PC-3 (cell line): ENCODE measurements at regions of chr18 and their contacts with region 1.

Region 1: GRCh38 chr18:3447895-3448837 is 1.8 kb upstream of the TGIF1 start:
- DNase-seq: peak; percentile 97
- ATAC-seq: peak; percentile 69
- H3K4me3 ChIP-seq: peak overlapping the region; percentile 96
- H3K27ac ChIP-seq: peak overlapping the region; percentile 95
- H3K4me1 ChIP-seq: peaks cover 19% of the 10 kb centered on the region
- H3K27me3 ChIP-seq: no peaks in the 10 kb centered on the region
- CTCF ChIP-seq: peak; percentile 45

Region 2: DNA sequence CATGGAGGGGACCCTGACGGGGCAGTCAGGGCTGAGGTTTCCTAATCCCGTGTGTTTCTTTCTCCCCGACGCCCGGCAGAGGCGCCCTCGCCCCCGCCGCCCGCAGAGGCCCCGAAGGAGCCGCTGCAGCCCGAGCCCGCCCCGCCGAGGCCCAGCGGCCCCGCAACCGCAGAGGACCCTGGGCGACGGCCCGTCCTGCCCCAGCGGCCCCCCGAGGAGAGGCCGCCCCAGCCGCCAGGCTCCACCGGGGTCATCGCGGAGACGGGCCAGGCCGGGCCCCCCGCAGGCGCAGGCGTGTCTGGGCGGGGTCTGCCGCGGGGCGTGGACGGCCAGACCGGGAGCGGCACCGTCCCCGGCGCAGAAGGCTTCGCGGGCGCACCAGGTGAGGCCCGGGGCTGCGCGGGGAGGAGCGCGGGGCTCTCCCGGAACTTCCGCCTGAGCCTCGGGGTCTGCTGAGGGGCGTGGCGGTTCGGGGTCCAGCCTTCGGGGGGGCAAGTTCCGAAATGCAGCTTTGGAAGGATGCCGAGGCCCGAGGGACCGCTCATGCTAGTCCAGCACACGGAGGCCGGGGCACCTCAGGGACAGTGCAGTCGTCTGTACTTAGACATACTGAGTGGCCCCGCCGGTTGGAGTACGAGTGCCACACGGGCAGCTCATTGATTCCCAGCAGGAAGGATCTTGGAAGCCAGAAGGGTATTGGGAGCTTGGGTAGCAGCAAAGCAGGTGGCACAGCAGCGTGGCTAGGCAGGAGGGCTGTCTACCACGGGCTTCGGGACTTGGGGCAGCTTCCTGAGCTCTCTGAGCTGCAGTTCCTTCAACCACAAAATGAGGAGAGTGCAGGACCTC is 541.2 kb before region 1 on chr18:
- CTCF ChIA-PET with region 1: no interaction called
- POLR2A ChIA-PET with region 1: interaction called, 13 read pairs
- intact Hi-C with region 1: no loop called
- DNase-seq: peak; percentile 31
- ATAC-seq: peak; percentile 65
- H3K4me3 ChIP-seq: peak overlapping the region; percentile 84
- H3K27ac ChIP-seq: no peak overlapping the region; the same call in 1 of the 2 replicates
- H3K4me1 ChIP-seq: peaks cover 6% of the 10 kb centered on the region; the same call in 1 of the 2 replicates
- H3K27me3 ChIP-seq: 0 out of 2 replicates have a peak, but pooled peaks cover 3% of the 10 kb centered on the region
- CTCF ChIP-seq: no peak; the same call in 1 of the 2 replicates

Region 3: DNA sequence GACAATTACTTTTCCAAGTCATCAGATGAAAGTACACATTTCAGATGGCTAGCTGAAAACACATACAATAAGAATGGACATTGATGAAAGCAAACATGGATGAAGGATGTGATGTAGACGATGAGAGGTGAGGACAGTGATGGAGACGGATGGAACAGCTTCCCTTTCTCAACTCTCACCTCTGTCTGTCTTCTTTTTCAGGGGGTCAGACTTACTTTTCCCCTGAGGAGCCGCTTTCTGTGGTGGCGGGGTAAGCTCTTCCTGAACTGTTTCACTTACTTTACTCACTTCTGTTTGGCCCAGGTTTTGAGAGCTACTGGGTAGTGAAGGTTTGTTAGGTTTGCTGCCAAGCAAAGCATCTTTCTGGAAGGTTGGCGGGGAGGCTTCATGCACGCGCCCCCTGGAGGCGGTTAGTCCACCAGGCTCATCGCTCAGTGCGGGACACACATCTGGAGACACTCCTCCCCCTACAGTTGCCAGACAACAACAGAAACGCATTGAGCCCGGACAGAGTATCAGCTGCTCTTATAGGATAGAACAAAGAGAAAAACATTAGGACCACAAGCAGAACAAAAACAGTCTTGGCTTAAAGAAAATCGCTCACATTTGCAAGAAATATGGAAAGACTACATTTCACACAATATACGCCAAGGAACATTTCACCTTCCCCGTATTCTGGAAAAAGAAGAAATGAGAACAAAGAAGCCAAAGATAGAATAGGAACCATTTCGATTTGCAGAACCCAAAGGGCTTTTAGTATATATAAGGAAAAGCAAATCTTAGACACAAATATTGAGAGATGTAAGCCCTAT is 318.9 kb before region 1 on chr18:
- CTCF ChIA-PET with region 1: interaction called, 5 read pairs
- POLR2A ChIA-PET with region 1: no interaction called
- intact Hi-C with region 1: loop called (anchors 10 kb)
- DNase-seq: peak; percentile 81
- ATAC-seq: peak; percentile 100
- H3K4me3 ChIP-seq: no peak overlapping the region
- H3K27ac ChIP-seq: no peak overlapping the region
- H3K4me1 ChIP-seq: no peaks in the 10 kb centered on the region
- H3K27me3 ChIP-seq: no peaks in the 10 kb centered on the region
- CTCF ChIP-seq: peak; percentile 96

Region 4: DNA sequence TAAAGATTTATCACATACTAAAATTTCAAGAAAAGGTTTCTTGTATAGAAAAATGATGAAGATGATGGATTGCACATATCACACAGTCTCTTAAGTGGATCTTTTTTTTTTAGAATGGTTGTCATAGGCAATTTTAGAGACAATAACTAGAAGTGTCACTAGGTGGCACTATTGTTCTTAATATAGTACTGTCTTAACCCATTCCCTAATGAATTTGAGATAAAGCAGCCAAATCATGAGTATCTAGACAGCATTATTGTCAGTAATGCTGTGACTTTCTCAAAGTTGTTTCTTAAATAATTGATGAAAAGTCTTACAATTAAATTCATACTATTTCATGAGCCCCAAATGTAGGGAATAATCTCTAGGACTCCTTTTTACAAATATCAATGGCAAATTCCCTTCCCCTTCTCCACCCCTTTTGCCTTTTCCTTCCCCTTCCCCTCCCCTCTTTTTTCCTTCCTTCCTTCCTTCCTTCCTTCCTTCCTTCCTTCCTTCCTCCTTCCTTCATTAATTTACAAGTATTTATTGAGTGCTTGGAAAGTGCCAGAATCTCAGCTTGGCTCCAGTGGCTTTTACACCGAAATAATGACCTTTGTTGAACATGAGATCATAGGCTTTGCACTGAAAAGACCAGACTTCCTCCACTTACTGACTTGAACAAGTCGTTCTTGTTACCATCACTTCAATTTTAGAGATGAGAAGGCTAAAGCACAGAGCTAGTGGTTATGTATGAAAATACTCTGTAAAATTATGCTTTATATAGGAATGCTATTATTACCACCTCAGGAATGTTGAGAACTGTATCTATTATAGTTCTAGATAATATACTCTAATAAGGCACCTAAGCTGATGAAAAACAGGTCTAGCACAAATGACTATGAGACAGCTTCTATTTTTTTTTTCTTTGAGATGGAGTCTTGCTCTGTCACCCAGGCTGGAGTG is 166.4 kb before region 1 on chr18:
- CTCF ChIA-PET with region 1: interaction called, 13 read pairs
- POLR2A ChIA-PET with region 1: interaction called, 4 read pairs
- intact Hi-C with region 1: no loop called
- DNase-seq: peak; percentile 96
- ATAC-seq: peak; percentile 64
- H3K4me3 ChIP-seq: no peak overlapping the region
- H3K27ac ChIP-seq: no peak overlapping the region
- H3K4me1 ChIP-seq: peaks cover 27% of the 10 kb centered on the region
- H3K27me3 ChIP-seq: no peaks in the 10 kb centered on the region
- CTCF ChIP-seq: peak; percentile 87

Region 5: GRCh38 chr18:3321133-3321812 is 126.9 kb before region 1 on chr18:
- CTCF ChIA-PET with region 1: interaction called, 6 read pairs
- POLR2A ChIA-PET with region 1: interaction called, 4 read pairs
- intact Hi-C with region 1: loop called (anchors 1 kb)
- DNase-seq: peak; percentile 97
- ATAC-seq: peak; percentile 68
- H3K4me3 ChIP-seq: no peak overlapping the region
- H3K27ac ChIP-seq: peak overlapping the region; percentile 69
- H3K4me1 ChIP-seq: peaks cover 36% of the 10 kb centered on the region
- H3K27me3 ChIP-seq: no peaks in the 10 kb centered on the region
- CTCF ChIP-seq: no peak

Region 6: DNA sequence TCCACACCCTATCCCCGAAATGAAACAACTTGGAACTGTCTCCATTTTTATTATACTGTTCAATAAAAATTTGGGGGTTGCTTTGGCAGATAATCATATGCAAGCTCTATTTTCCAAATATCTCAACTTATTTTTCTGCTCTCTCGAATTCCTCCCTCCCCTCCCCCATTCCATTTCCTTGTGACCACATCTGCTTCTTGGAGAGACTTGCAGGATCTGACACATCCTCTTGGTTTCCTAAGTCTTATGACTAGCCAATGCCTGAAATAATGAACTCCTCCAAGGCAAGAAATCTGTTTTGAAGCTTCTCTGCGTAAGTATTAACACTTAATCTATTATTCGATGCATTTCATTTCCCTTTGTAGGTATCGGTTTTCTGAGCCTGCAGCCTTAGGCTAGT is 17.9 kb after region 1 on chr18:
- CTCF ChIA-PET with region 1: no interaction called
- POLR2A ChIA-PET with region 1: no interaction called
- intact Hi-C with region 1: no loop called
- DNase-seq: peak; percentile 74
- ATAC-seq: peak; percentile 79
- H3K4me3 ChIP-seq: peak overlapping the region; percentile 4; the same call in 1 of the 2 replicates
- H3K27ac ChIP-seq: peak overlapping the region; percentile 43
- H3K4me1 ChIP-seq: peaks cover 13% of the 10 kb centered on the region
- H3K27me3 ChIP-seq: no peaks in the 10 kb centered on the region
- CTCF ChIP-seq: no peak

Region 7: DNA sequence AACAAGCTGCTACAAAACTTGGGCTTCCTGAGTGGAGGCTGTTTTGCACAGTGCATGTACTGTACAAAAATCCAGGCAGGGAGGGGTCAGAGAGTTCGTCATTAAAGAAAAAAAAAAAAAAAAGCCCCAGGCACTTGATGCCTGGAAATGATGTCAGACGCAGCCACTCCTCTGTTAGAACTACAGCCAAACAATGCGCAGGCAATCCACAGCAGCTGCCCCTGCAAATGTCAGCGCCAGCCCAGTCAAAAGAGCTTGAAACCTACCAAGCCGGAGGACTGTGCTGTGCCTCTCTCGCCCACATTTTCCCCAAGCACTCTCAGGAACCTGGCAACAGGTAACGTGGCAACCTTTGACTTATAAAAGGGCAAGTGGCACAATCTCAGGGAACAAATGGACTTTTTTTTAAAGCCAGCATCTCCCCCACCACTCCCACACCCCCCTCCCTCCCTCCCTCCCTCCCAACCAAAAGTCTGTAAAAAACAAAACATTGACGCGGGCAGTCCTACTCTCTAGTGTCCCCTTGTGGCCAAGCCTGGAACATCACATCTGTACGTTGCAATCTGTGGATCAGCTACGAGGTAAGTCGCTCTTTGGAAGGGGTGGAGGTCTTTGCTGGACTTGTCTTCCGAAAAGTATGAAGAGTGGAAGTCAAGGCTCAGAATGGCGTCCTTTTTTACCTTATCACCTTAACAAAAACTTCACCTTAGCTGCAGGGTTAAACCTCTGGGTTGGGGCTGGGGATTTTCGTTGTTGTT is 145.9 kb after region 1 on chr18:
- CTCF ChIA-PET with region 1: interaction called, 14 read pairs
- POLR2A ChIA-PET with region 1: interaction called, 16 read pairs
- intact Hi-C with region 1: loop called (anchors 1 kb)
- DNase-seq: peak; percentile 94
- ATAC-seq: peak; percentile 50
- H3K4me3 ChIP-seq: peak overlapping the region; percentile 60
- H3K27ac ChIP-seq: peak overlapping the region; percentile 99
- H3K4me1 ChIP-seq: peaks cover 45% of the 10 kb centered on the region
- H3K27me3 ChIP-seq: no peaks in the 10 kb centered on the region
- CTCF ChIP-seq: peak; percentile 81

Region 8: DNA sequence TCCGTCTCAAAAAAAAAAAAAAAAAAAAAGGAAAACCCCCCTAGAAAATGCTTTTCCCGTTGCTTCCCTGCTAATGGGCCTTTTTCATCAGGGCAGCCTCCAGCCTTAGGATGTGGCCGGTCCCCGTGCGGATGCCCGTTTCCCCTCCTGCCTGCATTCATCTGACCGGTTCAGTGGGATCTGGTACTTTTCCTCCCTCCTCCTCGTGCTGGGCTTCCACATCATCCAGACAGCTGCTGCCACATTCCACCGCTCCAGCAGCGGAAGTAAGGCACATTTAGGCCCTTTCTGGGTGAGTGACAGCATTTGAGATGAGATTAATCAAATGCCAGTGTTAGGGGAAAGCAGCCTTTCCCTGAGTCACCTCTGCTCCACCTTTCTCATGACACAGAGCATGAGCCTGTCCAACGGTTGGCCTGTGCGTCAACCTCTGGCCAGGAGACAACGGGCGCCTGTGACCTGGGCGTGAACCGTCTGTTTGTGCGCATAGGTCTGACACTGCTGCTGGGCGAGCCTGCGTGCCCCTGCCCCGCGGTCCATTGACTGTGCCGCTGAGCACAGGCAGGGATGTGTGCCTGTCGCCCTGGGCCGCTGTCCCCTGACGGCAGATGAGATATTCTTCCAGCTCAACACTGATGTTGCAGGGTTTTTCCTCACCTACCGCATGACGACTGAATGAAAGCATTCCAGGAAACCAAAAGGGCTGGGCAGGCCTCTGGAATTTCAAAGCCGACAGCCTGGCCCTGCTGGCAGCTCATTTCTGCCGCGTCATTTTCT is 175.8 kb after region 1 on chr18:
- CTCF ChIA-PET with region 1: no interaction called
- POLR2A ChIA-PET with region 1: interaction called, 13 read pairs
- intact Hi-C with region 1: loop called (anchors 1 kb)
- DNase-seq: peak; percentile 98
- ATAC-seq: peak; percentile 81
- H3K4me3 ChIP-seq: peak overlapping the region; percentile 53
- H3K27ac ChIP-seq: peak overlapping the region; percentile 98
- H3K4me1 ChIP-seq: peaks cover 50% of the 10 kb centered on the region
- H3K27me3 ChIP-seq: no peaks in the 10 kb centered on the region
- CTCF ChIP-seq: no peak